Transverse colon (tissue), 4 donors: ENCODE measurements at regions of chr17 and their contacts with region 1.

Region 1: GRCh38 chr17:66953634-66954023 is 10.9 kb upstream of the CACNG4 start:
- DNase-seq: no peak
- H3K4me3 ChIP-seq: no peak overlapping the region
- H3K27ac ChIP-seq: peak overlapping the region in 1 of 4 donors; percentile 67
- H3K4me1 ChIP-seq: peaks cover 0 to 15% (median 3%) of the 10 kb centered on the region in 4 donors
- H3K27me3 ChIP-seq: no peaks in the 10 kb centered on the region
- CTCF ChIP-seq: no peak
- EP300 ChIP-seq: no peak
- POLR2A ChIP-seq: no peak

Region 2: DNA sequence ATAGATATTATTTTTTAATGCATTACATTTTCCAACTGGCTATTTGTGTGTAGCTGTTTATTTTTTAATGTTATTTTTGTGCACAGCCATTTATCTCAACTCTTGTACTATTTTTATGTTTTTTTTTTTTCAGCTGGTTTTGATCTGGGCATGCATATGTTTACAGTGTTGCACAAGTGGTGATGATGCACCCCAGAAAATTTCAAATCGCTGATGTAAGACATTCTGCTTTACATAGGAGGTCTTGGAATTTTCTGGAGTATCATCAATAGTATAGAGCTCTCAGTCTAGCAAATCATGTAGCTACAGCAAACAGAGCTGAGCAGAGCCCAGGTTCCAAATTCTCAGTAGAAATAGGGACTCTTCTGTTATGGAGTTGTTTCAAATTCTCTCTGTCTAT is 88.5 kb before region 1 on chr17:
- in situ Hi-C with region 1: no loop called
- intact Hi-C with region 1: no loop called
- DNase-seq: no peak
- H3K4me3 ChIP-seq: no peak overlapping the region
- H3K27ac ChIP-seq: no peak overlapping the region
- H3K4me1 ChIP-seq: no peaks in the 10 kb centered on the region
- H3K27me3 ChIP-seq: no peaks in the 10 kb centered on the region
- CTCF ChIP-seq: no peak
- EP300 ChIP-seq: no peak
- POLR2A ChIP-seq: no peak

Region 3: GRCh38 chr17:66906321-66907278 is 47.0 kb before region 1 on chr17:
- in situ Hi-C with region 1: no loop called
- intact Hi-C with region 1: no loop called
- DNase-seq: peak; percentile 83
- H3K4me3 ChIP-seq: no peak overlapping the region
- H3K27ac ChIP-seq: no peak overlapping the region
- H3K4me1 ChIP-seq: peaks cover 0 to 8% (median 0%) of the 10 kb centered on the region in 4 donors
- H3K27me3 ChIP-seq: no peaks in the 10 kb centered on the region
- CTCF ChIP-seq: peak; percentile 84 to 90 (median 87)
- EP300 ChIP-seq: no peak
- POLR2A ChIP-seq: no peak

Region 4: GRCh38 chr17:66978514-66979061 is 25.0 kb after region 1 on chr17:
- in situ Hi-C with region 1: no loop called
- intact Hi-C with region 1: loop called (anchors 1 kb)
- DNase-seq: no peak
- H3K4me3 ChIP-seq: no peak overlapping the region
- H3K27ac ChIP-seq: no peak overlapping the region
- H3K4me1 ChIP-seq: no peaks in the 10 kb centered on the region
- H3K27me3 ChIP-seq: peaks cover 58% of the 10 kb centered on the region
- CTCF ChIP-seq: no peak
- EP300 ChIP-seq: no peak
- POLR2A ChIP-seq: no peak